Right ventricle myocardium inferior (tissue), 1 donor: ENCODE measurements at regions of chr20 and their contacts with region 1.

Region 1: GRCh38 chr20:54649511-54649962 is 174.1 kb downstream of the DOK5 start:
- DNase-seq: peak; percentile 69
- ATAC-seq: peak; percentile 74

Region 2: GRCh38 chr20:54097236-54097529 is 552.4 kb before region 1 on chr20:
- intact Hi-C with region 1: loop called (anchors 2 kb)
- DNase-seq: no peak
- ATAC-seq: no peak

Region 3: GRCh38 chr20:54219751-54220426 is 429.6 kb before region 1 on chr20:
- intact Hi-C with region 1: loop called (anchors 2 kb)
- DNase-seq: no peak
- ATAC-seq: no peak

Region 4: GRCh38 chr20:54456971-54457370 is 192.6 kb before region 1 on chr20:
- intact Hi-C with region 1: loop called (anchors 10 kb)
- DNase-seq: no peak
- ATAC-seq: no peak

Region 5: GRCh38 chr20:54475334-54476168 is 174.0 kb before region 1 on chr20 and contains the start of gene DOK5:
- intact Hi-C with region 1: loop called (anchors 5 kb)
- DNase-seq: peak; percentile 73
- ATAC-seq: peak; percentile 88
- total RNA-seq, gene DOK5: 3.0 TPM

Region 6: GRCh38 chr20:55714736-55715135 is 1065.2 kb after region 1 on chr20:
- intact Hi-C with region 1: no loop called
- DNase-seq: no peak
- ATAC-seq: no peak